IMR-90 (cell line): ENCODE measurements at regions of chr11 and their contacts with region 1.

Region 1: DNA sequence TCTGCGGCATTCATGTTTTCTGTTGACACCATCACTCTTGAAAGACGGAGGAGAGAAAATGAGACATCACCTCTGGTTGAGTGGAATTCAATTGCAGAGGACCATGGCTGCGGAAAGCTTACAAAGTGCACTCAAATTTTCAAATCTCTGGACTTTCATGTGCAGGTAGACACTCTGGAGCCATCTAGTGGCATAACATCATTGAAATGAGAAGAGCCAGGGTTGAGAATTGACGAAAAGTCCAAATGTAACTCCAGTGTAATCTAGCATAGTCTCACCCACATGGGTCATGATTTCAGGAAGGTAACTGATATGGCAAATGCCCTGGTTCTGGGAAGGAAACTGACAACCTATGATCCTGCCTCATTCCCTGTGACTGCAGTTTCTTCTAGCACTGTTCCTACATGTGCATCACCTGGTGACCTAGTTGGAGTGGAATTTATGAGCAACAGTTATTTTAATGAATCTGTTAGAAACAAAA is 687.8 kb downstream of the KCNA4 start:
- DNase-seq: peak; percentile 95
- ATAC-seq: peak; percentile 80
- H3K4me3 ChIP-seq: no peak overlapping the region
- H3K27ac ChIP-seq: peak overlapping the region; percentile 54
- H3K4me1 ChIP-seq: peaks cover 16% of the 10 kb centered on the region
- H3K27me3 ChIP-seq: no peaks in the 10 kb centered on the region
- CTCF ChIP-seq: peak; percentile 88
- POLR2A ChIP-seq: peak; percentile 62
- RAD21 ChIP-seq: peak; percentile 89

Region 2: GRCh38 chr11:28529540-28530410 is 799.2 kb before region 1 on chr11:
- CTCF ChIA-PET with region 1: interaction called, 3 read pairs
- POLR2A ChIA-PET with region 1: no interaction called
- dilution Hi-C with region 1: no loop called
- in situ Hi-C with region 1: no loop called
- intact Hi-C with region 1: loop called (anchors 1 kb)
- DNase-seq: peak; percentile 82
- ATAC-seq: peak; percentile 64
- H3K4me3 ChIP-seq: no peak overlapping the region
- H3K27ac ChIP-seq: peak overlapping the region; percentile 19; the same call in 1 of the 2 replicates
- H3K4me1 ChIP-seq: peaks cover 3% of the 10 kb centered on the region; the same call in 1 of the 2 replicates
- H3K27me3 ChIP-seq: no peaks in the 10 kb centered on the region
- CTCF ChIP-seq: peak; percentile 57
- POLR2A ChIP-seq: no peak
- RAD21 ChIP-seq: peak; percentile 59

Region 3: DNA sequence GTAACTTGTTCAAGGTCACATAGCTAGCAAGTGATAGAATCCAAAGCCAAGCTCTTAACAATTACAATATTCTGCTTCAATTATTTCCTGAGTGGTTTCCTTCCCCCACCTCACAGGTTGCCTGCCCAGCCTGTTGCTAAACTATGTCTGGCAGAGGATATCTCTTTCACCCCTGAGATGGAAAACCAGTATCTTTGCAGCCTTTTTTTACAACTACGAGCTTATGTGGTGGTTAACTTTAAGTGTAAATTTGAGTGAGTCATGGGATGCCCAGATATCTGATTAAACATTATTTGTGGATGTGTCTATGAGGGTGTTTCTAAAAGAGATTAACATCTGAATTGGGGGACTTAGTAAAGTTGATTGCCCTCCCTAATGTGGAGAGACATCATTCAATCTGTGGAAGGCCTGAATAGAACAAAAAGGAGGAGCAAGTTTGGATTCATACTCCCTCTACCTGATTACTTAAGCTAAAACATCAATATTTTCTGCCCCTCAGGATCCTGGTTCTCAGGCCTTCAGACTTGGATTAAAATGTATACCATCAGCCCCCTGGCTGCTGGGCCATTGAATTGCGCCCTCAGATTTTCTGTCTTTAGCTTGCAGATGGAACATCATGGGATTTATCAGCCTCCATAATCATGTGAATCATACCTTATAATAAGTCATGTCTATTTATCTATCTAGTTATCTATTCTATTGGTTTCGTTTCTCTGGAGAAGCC is 308.9 kb before region 1 on chr11:
- CTCF ChIA-PET with region 1: interaction called, 4 read pairs
- POLR2A ChIA-PET with region 1: no interaction called
- dilution Hi-C with region 1: no loop called
- in situ Hi-C with region 1: no loop called
- intact Hi-C with region 1: loop called (anchors 5 kb)
- DNase-seq: peak; percentile 66
- ATAC-seq: peak; percentile 38
- H3K4me3 ChIP-seq: no peak overlapping the region
- H3K27ac ChIP-seq: peak overlapping the region; percentile 30; the same call in 1 of the 2 replicates
- H3K4me1 ChIP-seq: peaks cover 6% of the 10 kb centered on the region; the same call in 1 of the 2 replicates
- H3K27me3 ChIP-seq: no peaks in the 10 kb centered on the region
- CTCF ChIP-seq: peak; percentile 63
- POLR2A ChIP-seq: no peak
- RAD21 ChIP-seq: peak; percentile 55

Region 4: GRCh38 chr11:29159552-29160465 is 169.2 kb before region 1 on chr11:
- CTCF ChIA-PET with region 1: interaction called, 11 read pairs
- POLR2A ChIA-PET with region 1: interaction called, 3 read pairs
- dilution Hi-C with region 1: no loop called
- in situ Hi-C with region 1: no loop called
- intact Hi-C with region 1: loop called (anchors 1 kb)
- DNase-seq: peak; percentile 90
- ATAC-seq: peak; percentile 98
- H3K4me3 ChIP-seq: no peak overlapping the region
- H3K27ac ChIP-seq: peak overlapping the region; percentile 89
- H3K4me1 ChIP-seq: peaks cover 9% of the 10 kb centered on the region
- H3K27me3 ChIP-seq: no peaks in the 10 kb centered on the region
- CTCF ChIP-seq: peak; percentile 85
- POLR2A ChIP-seq: peak; percentile 17; the same call in 1 of the 2 replicates
- RAD21 ChIP-seq: peak; percentile 94

Region 5: DNA sequence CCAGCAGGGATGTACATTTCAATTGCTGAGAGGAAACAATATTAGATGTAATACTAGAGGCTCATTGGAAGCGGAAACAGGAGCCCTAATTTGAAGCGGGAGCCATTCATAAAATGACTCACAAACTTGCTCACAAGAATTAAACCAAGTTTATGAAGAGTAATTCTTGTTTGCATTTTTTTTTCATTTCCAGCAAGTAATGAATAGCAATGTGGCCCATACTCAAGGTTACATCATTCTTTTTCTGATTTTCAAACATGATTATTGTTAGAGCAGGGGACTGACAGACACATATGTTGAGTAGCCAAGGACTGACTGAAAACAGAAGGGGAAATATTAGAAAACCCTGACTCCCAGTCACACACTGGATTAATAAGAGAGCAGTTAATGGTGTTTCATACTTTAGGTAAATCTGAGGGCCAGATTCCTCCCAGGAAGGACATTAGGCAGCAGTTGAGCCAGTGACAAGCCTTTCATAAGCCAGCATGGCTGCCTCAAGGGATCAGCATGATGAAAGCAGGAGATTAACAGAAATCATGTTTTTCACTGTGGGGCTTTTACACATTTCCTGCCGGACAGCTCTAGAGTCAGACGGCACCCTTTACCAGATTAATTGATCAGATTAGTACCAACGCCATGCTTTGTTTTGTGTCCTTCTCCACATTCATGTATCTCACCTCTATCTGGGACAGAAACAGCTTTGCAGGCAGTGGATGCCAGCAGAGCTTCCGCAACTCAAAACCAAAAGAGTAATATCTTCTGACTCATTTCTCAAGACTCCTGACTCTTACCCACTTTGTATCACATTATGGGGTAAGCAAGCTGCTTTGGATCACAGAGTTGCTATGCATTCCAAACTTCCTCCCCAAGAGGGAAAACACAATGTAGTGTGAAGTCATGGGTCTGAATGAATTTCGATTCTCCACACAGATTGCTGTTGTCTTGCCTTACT is 143.8 kb before region 1 on chr11:
- CTCF ChIA-PET with region 1: no interaction called
- POLR2A ChIA-PET with region 1: no interaction called
- dilution Hi-C with region 1: no loop called
- in situ Hi-C with region 1: no loop called
- intact Hi-C with region 1: loop called (anchors 1 kb)
- DNase-seq: peak; percentile 98
- ATAC-seq: peak; percentile 83
- H3K4me3 ChIP-seq: no peak overlapping the region
- H3K27ac ChIP-seq: peak overlapping the region; percentile 100
- H3K4me1 ChIP-seq: peaks cover 11% of the 10 kb centered on the region
- H3K27me3 ChIP-seq: no peaks in the 10 kb centered on the region
- CTCF ChIP-seq: no peak
- POLR2A ChIP-seq: no peak
- RAD21 ChIP-seq: peak; percentile 26; the same call in 1 of the 2 replicates

Region 6: DNA sequence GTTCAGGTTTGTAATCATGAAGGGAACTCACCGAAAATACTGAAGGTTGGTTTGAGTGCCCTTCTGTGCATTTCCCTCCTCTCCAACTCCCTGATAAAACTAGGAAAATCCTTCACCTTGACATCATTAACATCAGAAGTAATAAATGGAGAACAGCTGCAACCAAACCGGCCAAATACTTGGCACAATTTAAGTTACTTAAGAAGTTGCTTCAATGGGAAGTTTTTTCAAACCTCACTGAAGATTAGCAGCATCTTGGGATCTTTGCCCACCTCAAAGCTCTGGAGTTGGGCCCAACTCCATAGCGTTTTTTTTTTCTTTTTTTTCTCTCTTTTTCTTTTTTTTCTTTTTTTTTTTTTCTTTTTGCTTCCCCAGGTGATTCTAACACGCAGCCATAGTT is 97.0 kb before region 1 on chr11:
- CTCF ChIA-PET with region 1: no interaction called
- POLR2A ChIA-PET with region 1: no interaction called
- dilution Hi-C with region 1: no loop called
- in situ Hi-C with region 1: no loop called
- intact Hi-C with region 1: no loop called
- DNase-seq: peak; percentile 43
- ATAC-seq: no peak
- H3K4me3 ChIP-seq: no peak overlapping the region
- H3K27ac ChIP-seq: no peak overlapping the region
- H3K4me1 ChIP-seq: peaks cover 2% of the 10 kb centered on the region; the same call in 1 of the 2 replicates
- H3K27me3 ChIP-seq: no peaks in the 10 kb centered on the region
- CTCF ChIP-seq: no peak
- POLR2A ChIP-seq: no peak
- RAD21 ChIP-seq: no peak

Region 7: GRCh38 chr11:29448246-29448877 is 119.4 kb after region 1 on chr11:
- CTCF ChIA-PET with region 1: no interaction called
- POLR2A ChIA-PET with region 1: no interaction called
- dilution Hi-C with region 1: no loop called
- in situ Hi-C with region 1: no loop called
- intact Hi-C with region 1: no loop called
- DNase-seq: peak; percentile 25
- ATAC-seq: peak; percentile 83
- H3K4me3 ChIP-seq: no peak overlapping the region
- H3K27ac ChIP-seq: no peak overlapping the region
- H3K4me1 ChIP-seq: peaks cover 1% of the 10 kb centered on the region; the same call in 1 of the 2 replicates
- H3K27me3 ChIP-seq: no peaks in the 10 kb centered on the region
- CTCF ChIP-seq: peak; percentile 49
- POLR2A ChIP-seq: no peak
- RAD21 ChIP-seq: peak; percentile 50